Lower leg skin (tissue), 4 donors: ENCODE measurements at regions of chr12 and their contacts with region 1.

Region 1: GRCh38 chr12:3727877-3728632 is 24.9 kb downstream of the CRACR2A start:
- DNase-seq: no peak
- H3K4me3 ChIP-seq: no peak overlapping the region
- CTCF ChIP-seq: no peak
- POLR2A ChIP-seq: no peak

Region 2: GRCh38 chr12:1890810-1891209 is 1837.2 kb before region 1 on chr12:
- intact Hi-C with region 1: loop called (anchors 5 kb)
- DNase-seq: no peak
- H3K4me3 ChIP-seq: no peak overlapping the region
- CTCF ChIP-seq: no peak
- POLR2A ChIP-seq: no peak

Region 3: GRCh38 chr12:4857472-4858291 is 1129.6 kb after region 1 on chr12:
- intact Hi-C with region 1: no loop called
- DNase-seq: peak; percentile 67 to 92
- H3K4me3 ChIP-seq: no peak overlapping the region
- CTCF ChIP-seq: peak in 1 of 3 donors; percentile 43
- POLR2A ChIP-seq: no peak